HepG2 (cell line): ENCODE measurements at regions of chr16 and their contacts with region 1.

Region 1: GRCh38 chr16:87950765-87951549 is at the start of gene BANP:
- DNase-seq: peak; percentile 99
- ATAC-seq: peak; percentile 97
- H3K4me3 ChIP-seq: peak within 1 kb of the TSS; percentile 72 to 85 (median 79)
- H3K27ac ChIP-seq: peak within 1 kb of the TSS; percentile 92
- H3K4me1 ChIP-seq: peaks cover 84% of the 10 kb centered on the region
- H3K27me3 ChIP-seq: no peaks in the 10 kb centered on the region
- CTCF ChIP-seq: peak; percentile 80
- EP300 ChIP-seq: peak; percentile 6 to 66; a peak in 2 of 4 replicates
- POLR2A ChIP-seq: peak; percentile 75 to 80
- RAD21 ChIP-seq: peak; percentile 56
- total RNA-seq, gene BANP: 13.0 and 20.2 TPM in 2 replicates

Region 2: GRCh38 chr16:87939303-87940077 is 11.5 kb before region 1 on chr16:
- CTCF ChIA-PET with region 1: no interaction called
- POLR2A ChIA-PET with region 1: interaction called, 110 read pairs
- in situ Hi-C with region 1: no loop called
- intact Hi-C with region 1: loop called (anchors 1 kb)
- DNase-seq: peak; percentile 26
- ATAC-seq: no peak
- H3K4me3 ChIP-seq: no peak overlapping the region; a peak in 2 of 6 replicates
- H3K27ac ChIP-seq: no peak overlapping the region
- H3K4me1 ChIP-seq: peaks cover 51% of the 10 kb centered on the region
- H3K27me3 ChIP-seq: no peaks in the 10 kb centered on the region; a peak in 1 of 5 replicates
- CTCF ChIP-seq: no peak
- EP300 ChIP-seq: no peak
- POLR2A ChIP-seq: no peak
- RAD21 ChIP-seq: no peak

Region 3: GRCh38 chr16:87963400-87963799 is 12.4 kb after region 1 on chr16:
- CTCF ChIA-PET with region 1: no interaction called
- POLR2A ChIA-PET with region 1: interaction called, 15 read pairs
- in situ Hi-C with region 1: no loop called
- intact Hi-C with region 1: no loop called
- DNase-seq: no peak
- ATAC-seq: no peak
- H3K4me3 ChIP-seq: no peak overlapping the region
- H3K27ac ChIP-seq: no peak overlapping the region
- H3K4me1 ChIP-seq: peaks cover 41% of the 10 kb centered on the region
- H3K27me3 ChIP-seq: no peaks in the 10 kb centered on the region
- CTCF ChIP-seq: no peak
- EP300 ChIP-seq: no peak
- POLR2A ChIP-seq: no peak
- RAD21 ChIP-seq: no peak

Region 4: DNA sequence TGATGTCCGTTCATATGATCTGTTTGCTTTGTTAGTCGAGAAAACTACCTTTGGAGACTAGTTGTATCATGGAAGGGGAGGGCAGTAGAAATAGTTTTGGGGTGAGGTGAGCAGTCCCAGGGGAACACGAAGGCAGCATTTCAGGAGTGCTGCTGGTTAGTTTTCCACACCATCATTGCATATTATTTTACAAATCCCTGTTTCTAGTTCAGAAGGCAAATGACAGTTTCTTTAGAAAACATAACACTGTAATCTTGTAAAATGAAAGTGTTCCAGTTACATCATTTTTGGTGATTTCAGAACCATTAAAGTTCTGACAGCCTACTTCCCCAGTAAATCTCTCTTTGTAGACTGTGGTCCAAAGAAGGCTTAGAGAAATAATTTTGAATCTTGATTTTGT is 25.7 kb after region 1 on chr16:
- CTCF ChIA-PET with region 1: no interaction called
- POLR2A ChIA-PET with region 1: no interaction called
- in situ Hi-C with region 1: no loop called
- intact Hi-C with region 1: no loop called
- DNase-seq: no peak
- ATAC-seq: no peak
- H3K4me3 ChIP-seq: no peak overlapping the region
- H3K27ac ChIP-seq: no peak overlapping the region
- H3K4me1 ChIP-seq: peaks cover 7% of the 10 kb centered on the region; the same call in 1 of the 2 replicates
- H3K27me3 ChIP-seq: no peaks in the 10 kb centered on the region
- CTCF ChIP-seq: no peak
- EP300 ChIP-seq: no peak
- POLR2A ChIP-seq: no peak
- RAD21 ChIP-seq: no peak